HAP-1 (cell line): ENCODE measurements at regions of chr15 and their contacts with region 1.

Region 1: DNA sequence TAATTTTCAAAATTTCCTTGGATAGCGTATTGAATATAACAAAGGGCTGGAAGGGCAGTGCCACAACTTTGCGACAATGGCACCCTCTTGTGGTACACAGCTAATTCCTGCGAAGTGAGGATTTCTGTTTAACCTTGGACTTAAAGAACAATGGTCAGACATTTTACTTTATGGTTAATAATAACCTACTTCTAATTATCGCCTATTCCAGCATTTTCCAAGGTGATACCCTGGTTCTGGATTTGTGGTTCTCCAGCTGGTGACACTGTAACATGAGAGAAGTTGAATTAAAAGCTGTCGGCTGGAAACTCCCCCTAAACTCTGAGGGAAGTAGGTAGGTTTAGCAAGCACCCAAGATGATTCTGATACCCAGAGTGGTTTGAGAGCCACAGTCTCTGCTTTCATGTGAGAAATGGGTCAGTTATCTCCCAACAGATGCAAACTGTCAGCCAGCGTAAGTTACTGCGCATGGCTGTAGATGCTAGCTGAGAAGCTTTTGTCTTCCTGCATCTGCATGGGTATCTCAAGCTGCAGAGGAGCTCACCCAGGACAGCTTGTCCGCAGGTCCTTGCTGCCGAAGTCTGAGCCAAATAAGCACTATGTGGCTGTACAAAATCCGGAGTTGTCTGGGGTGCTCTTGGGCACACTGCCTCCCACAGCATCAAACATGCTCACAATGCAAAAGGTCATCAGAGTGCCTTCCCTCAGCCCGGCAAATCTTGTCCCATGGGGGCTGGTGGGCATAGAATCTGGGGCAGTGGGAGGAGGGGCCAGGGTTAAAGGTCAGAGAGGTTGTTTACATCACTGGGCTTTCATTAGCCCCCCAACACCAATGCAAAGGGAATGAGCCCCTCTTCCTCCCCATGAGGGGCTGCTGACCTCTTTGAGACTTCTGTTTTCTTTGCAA is 6.6 kb upstream of the CHSY1 start:
- DNase-seq: peak; percentile 72
- H3K4me3 ChIP-seq: no peak overlapping the region
- H3K4me1 ChIP-seq: no peaks in the 10 kb centered on the region
- H3K27me3 ChIP-seq: 0 out of 2 replicates have a peak, but pooled peaks cover 3% of the 10 kb centered on the region

Region 2: DNA sequence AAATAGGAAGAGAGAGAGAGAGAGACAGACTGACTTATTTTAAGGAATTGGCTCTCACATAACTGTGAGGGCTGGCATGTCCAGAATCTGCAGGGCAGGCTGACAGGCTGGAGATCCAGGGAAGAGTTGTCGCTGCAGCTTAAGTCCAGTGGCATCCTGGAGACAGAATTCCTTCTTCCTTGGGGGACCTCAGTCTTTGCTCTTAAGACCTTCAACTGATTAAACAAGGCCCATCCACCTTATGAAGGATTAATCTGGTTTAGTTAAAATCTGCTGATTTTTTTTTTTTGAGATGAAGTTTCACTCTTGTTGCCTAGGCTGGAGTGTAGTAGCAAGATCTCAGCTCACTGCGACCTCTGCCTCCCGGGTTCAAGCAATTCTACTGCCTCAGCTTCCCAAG is 506.9 kb before region 1 on chr15:
- in situ Hi-C with region 1: no loop called
- DNase-seq: no peak
- H3K4me3 ChIP-seq: no peak overlapping the region
- H3K4me1 ChIP-seq: no peaks in the 10 kb centered on the region
- H3K27me3 ChIP-seq: no peaks in the 10 kb centered on the region

Region 3: DNA sequence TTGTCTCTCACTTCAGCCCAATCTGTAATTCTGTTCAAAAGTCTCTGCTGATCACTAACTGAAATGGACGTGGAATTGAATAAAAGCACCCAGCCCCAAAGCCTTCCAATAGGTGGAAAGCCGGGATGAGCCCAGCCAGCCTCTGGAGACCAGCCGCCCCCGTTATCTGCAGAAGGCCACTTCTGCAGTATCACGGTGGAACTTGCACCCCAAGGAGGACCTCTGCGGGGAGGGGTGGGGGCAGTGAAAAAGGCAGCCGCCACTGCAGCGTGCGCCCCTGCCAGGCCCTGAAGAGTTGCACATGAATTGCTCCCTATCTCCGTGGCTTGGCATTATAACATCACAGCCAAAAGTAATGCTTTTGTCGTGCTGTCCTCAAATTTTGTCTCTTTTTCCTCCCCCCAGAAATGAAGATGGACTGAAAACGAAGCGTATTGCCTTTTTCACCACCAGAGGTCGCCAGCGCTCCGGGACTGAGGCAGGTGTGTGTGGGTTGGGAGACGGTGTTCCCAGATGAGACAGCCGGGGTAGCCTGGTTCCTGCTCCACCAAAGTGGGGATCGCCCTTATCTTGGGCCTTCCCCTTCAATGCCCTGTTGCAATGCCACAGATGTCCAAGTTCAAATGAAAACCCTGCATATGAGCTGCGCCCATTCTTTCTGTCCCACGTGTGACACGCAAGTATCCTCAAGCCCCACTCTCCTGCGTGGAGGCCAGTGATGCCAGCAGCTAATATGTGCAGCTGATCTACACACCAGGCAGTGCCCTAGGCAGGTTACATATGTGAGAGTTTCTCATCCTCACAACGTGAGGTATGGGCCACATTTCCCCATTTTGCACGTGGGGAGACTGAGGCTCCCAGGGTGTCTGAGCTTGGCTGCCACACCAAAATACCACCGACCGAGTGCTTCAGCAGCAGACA is 243.3 kb before region 1 on chr15:
- in situ Hi-C with region 1: loop called (anchors 5 kb)
- DNase-seq: peak; percentile 20 to 84
- H3K4me3 ChIP-seq: no peak overlapping the region
- H3K4me1 ChIP-seq: no peaks in the 10 kb centered on the region
- H3K27me3 ChIP-seq: no peaks in the 10 kb centered on the region

Region 4: DNA sequence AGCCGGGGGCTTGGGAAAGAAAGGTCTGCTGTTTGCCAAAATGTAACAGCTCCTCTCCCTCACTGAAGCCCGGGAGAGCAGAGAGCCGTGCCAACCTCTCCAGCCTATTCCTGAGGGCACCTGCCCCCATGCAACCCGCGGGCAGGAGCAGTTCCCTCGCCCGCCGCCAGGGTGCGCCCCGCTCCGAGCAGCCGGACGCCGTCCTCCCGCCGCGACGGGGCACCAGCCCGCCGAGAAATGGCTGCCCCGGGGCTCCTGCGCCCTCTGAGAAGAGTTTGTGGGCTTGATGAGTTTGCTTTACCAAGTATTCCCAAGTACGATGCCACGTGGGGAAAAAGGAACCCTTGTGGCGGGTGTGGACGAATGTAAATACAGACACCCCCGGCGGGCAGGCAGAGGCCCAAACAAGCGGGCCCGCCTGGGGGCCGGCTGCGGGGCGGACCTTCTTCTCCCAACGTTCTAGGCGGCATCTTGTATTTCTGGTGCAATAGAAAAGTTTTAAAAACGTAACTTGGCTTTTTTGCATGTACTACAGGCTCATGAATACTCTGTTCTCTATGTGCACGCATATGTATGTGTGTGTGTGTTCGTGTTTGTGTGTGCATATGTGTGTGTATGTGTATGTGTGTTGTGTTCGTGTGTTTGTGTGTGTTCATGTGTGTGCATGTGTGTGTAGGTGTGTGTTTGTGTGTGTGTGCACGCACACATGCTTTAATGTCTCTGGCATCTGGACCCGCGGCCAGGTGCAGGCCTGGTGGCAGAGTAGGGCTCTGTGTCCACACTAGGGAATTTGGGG is 169.5 kb before region 1 on chr15:
- in situ Hi-C with region 1: loop called (anchors 5 kb)
- DNase-seq: peak; percentile 36 to 86
- H3K4me3 ChIP-seq: peak overlapping the region; percentile 10; the same call in 1 of the 2 replicates
- H3K4me1 ChIP-seq: peaks cover 5% of the 10 kb centered on the region
- H3K27me3 ChIP-seq: no peaks in the 10 kb centered on the region

Region 5: GRCh38 chr15:101358895-101359294 is 100.4 kb after region 1 on chr15:
- in situ Hi-C with region 1: no loop called
- DNase-seq: no peak
- H3K4me3 ChIP-seq: no peak overlapping the region
- H3K4me1 ChIP-seq: no peaks in the 10 kb centered on the region
- H3K27me3 ChIP-seq: no peaks in the 10 kb centered on the region

Region 6: GRCh38 chr15:101813803-101814534 is 555.5 kb after region 1 on chr15:
- in situ Hi-C with region 1: no loop called
- DNase-seq: no peak
- H3K4me3 ChIP-seq: no peak overlapping the region
- H3K4me1 ChIP-seq: peaks cover 2% of the 10 kb centered on the region; the same call in 1 of the 2 replicates
- H3K27me3 ChIP-seq: peaks cover 30% of the 10 kb centered on the region